ENCODE measurements at regions of chr4 and their contacts with region 1.

Region 1: GRCh38 chr4:183106839-183107238 is 7.8 kb downstream of the WWC2 start:
- DNase-seq: no peak
- ATAC-seq: no peak
- H3K4me3 ChIP-seq: no peak overlapping the region
- H3K27ac ChIP-seq: no peak overlapping the region
- H3K4me1 ChIP-seq: peaks cover 0 to 1% of the 10 kb centered on the region in 2 donors
- H3K27me3 ChIP-seq: no peaks in the 10 kb centered on the region

Region 2: DNA sequence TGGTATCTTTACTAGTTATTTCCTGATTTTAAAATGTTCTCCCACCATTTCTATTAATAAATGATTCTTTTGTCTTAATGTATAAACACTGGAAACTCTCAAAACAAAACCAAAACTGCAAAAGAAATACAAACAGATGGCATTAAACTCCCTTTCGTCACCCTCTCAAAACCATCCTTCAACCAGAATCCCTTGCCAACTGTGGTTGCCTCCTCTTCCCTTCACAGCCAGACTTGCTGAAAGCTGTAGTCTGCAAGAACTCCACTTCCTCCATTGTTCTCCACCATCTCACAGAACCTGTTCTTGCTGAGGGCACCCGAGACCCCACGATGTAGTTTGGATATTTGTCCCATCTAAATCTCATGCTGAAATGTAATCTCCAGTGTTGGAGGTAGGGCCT is 88.7 kb after region 1 on chr4:
- intact Hi-C with region 1: loop called in 1 of 2 experiments (anchors 5 kb)
- DNase-seq: no peak
- ATAC-seq: no peak
- H3K4me3 ChIP-seq: no peak overlapping the region
- H3K27ac ChIP-seq: no peak overlapping the region
- H3K4me1 ChIP-seq: no peaks in the 10 kb centered on the region
- H3K27me3 ChIP-seq: no peaks in the 10 kb centered on the region